CD4-positive, alpha-beta memory T cell (primary cell): ENCODE measurements at regions of chr15 and their contacts with region 1.

Region 1: DNA sequence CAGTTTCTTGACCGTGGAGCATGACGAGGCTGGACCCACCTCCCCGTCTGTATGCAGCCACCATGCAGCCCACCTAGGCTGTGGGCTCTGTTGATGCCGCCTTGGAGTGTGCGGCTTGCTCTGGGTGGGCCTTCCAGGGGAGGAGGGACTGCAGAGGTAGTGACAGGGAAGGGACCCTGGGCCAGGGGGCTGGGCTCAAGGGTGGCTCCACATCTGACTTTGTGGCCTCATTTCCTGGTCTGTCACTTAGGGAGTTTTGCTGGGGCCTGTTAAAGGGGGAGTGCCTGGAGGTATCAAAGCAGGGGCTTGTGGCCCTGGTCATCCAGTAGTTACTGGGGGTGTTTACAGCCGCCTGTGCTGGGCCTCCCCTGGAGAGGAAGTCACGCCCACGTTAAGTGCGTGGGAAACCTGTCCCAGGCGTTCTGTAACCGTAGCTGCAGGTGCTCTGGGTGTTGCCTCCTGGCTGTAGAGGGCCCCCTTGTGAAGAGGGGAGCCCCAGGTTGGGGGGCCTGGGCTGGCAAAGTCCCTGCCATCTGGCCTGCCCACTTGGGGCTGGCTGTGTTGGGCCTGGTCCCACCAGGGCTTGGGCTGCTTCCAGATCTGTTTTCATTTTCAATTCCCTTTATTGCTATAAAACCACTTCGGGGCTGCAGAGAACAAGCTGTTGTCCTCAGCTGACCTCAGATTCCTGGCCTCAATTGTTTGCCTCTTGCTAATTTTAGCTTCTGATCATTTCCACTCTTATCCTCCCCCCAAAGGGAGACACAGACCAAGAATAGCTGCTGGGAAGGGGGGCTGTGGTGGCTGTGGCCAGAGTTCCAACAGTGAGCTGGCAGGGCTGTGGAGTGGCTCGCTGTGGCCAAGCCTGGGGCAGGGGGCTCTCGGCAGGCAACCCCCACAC is 26.5 kb downstream of the KLF13 start:
- DNase-seq: peak in 4 of 5 donors; percentile 42 to 72 (median 52)
- H3K4me3 ChIP-seq: peak overlapping the region; percentile 15 to 31
- H3K4me3 Mint-ChIP-seq: peak overlapping the region; percentile 76 to 92 (median 85)
- H3K27ac ChIP-seq: peak overlapping the region; percentile 74
- H3K27ac Mint-ChIP-seq: peak overlapping the region; percentile 91 to 99 (median 95)
- H3K4me1 ChIP-seq: peaks cover 100% of the 10 kb centered on the region
- H3K4me1 Mint-ChIP-seq: peaks cover 71 to 100% (median 91%) of the 10 kb centered on the region in 4 donors
- H3K27me3 ChIP-seq: no peaks in the 10 kb centered on the region
- H3K27me3 Mint-ChIP-seq: no peaks in the 10 kb centered on the region

Region 2: DNA sequence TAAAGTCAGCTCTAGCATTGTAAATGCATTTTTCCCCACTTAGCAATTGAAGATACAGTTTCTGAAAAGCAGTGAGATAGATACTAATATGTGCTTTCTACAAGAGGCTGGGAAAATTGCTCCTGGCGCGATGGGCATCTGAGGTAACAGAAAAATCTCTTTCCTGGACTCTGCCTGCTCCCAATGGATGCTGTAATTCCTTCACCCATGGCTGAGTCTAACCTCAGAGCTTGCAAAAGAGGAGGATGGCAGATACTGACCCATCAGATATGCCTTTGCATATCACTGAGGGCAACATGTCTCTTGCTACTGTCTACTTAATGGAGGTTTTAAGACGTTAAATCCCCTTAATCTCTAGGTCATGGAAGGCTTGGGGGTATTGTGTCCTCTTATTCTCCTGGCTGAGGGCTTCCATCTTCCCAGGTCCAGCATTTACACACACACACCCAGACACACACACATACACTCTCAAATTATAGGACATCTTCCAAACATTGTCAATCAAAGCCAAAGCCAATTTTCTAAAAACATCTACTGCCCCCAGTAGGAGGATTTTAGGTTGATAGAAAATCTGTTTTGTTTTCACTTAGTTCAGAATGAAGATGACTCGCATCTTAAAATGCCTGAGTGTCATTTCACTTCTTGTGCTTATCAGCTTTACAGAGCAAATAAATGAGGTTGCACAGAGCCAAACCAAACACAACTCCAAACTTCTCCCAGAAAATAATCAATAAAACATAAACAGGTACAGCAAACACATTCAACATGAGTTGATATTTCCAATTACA is 254.0 kb before region 1 on chr15:
- CTCF ChIA-PET with region 1: no interaction called
- POLR2A ChIA-PET with region 1: no interaction called
- intact Hi-C with region 1: no loop called
- DNase-seq: no peak
- H3K4me3 ChIP-seq: no peak overlapping the region
- H3K4me3 Mint-ChIP-seq: no peak overlapping the region
- H3K27ac ChIP-seq: no peak overlapping the region
- H3K27ac Mint-ChIP-seq: no peak overlapping the region
- H3K4me1 ChIP-seq: no peaks in the 10 kb centered on the region
- H3K4me1 Mint-ChIP-seq: no peaks in the 10 kb centered on the region
- H3K27me3 ChIP-seq: no peaks in the 10 kb centered on the region
- H3K27me3 Mint-ChIP-seq: peaks cover 2 to 12% of the 10 kb centered on the region in 2 donors

Region 3: DNA sequence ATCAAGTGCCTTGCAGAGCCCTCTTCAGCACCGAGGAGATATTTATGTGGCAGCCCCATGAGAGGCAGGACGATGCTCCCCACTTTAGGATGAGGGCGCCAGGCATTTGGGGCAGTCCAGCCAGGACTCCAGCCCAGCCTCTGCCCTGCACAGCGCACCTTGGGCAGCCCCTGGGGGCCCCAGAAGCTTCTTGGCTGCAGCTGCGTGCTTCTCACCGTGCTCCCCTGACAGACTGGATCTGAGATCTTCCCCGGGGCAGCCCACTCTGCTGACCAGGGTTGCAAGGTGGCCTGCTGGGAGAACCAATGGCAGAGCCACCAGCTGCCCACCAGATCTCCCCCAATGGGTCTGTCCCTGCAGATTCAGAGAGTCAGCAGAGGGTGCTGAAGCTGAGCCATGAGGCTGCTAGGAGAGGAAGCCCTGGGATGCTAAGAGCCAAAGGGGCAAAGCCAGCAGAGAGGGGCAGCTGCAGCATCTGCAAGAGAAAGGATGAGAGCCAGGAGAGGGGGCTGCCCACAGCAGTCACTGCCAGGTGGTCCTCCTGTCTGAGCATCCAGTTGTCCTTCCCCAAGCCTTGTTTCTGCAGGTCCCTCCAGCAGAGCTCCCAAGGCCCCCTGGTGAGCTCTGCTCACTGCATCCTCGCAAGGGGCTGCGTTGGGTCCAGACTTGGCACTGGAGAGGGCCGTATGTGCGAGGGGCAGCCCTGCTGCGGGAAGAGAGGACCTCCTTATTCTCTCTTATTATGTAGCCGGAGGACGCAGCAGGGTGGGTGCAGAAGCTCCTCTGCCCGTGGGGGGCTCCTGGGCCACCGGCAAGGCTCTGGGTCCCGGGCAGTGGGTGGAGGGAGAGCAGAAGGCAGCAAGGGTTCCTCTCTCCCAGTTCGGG is 41.2 kb before region 1 on chr15:
- CTCF ChIA-PET with region 1: no interaction called
- POLR2A ChIA-PET with region 1: no interaction called
- intact Hi-C with region 1: no loop called
- DNase-seq: no peak
- H3K4me3 ChIP-seq: no peak overlapping the region
- H3K4me3 Mint-ChIP-seq: no peak overlapping the region
- H3K27ac ChIP-seq: no peak overlapping the region
- H3K27ac Mint-ChIP-seq: no peak overlapping the region
- H3K4me1 ChIP-seq: peaks cover 12% of the 10 kb centered on the region
- H3K4me1 Mint-ChIP-seq: peaks cover 7 to 18% (median 11%) of the 10 kb centered on the region in 4 donors
- H3K27me3 ChIP-seq: no peaks in the 10 kb centered on the region
- H3K27me3 Mint-ChIP-seq: peaks cover 0 to 5% of the 10 kb centered on the region in 2 donors

Region 4: DNA sequence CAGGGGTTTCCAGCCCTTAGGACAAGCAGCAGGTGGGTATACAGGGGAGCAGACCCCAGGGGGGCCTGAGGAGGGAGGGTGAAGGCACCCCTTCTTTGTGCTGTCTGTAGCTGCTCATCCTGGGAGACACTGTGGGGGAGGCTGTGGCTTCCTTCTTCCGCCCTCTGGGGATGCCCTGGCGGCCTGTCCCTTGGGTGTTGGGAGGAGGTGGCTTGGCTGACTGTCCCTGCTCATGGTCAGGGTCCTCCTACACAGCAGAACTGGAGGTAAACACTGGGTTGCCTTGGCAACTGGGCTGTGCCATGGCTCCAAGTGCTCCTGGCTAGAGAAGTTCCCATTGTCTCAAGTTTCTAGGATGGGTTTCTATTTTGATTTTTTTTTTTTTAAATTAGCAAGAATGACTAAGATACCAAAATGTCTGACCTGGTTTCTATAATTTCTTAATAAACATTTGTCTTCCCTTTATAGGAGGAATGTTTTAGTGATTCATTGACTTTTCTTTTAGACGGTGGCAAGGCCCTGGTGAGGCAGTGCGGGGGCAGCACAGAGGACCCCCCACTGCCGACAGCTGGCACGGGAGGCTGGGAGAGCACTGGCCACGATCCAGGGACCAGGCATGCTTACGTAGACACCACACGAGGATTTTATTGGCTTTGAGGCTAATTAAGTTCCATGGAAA is 14.1 kb before region 1 on chr15:
- CTCF ChIA-PET with region 1: interaction called, 5 read pairs
- POLR2A ChIA-PET with region 1: interaction called, 562 read pairs
- intact Hi-C with region 1: loop called (anchors 1 kb)
- DNase-seq: no peak
- H3K4me3 ChIP-seq: no peak overlapping the region
- H3K4me3 Mint-ChIP-seq: peak overlapping the region in 7 of 8 donors; percentile 49 to 78 (median 72)
- H3K27ac ChIP-seq: peak overlapping the region; percentile 46
- H3K27ac Mint-ChIP-seq: peak overlapping the region; percentile 86 to 98 (median 91)
- H3K4me1 ChIP-seq: peaks cover 99% of the 10 kb centered on the region
- H3K4me1 Mint-ChIP-seq: peaks cover 71 to 100% (median 95%) of the 10 kb centered on the region in 4 donors
- H3K27me3 ChIP-seq: no peaks in the 10 kb centered on the region
- H3K27me3 Mint-ChIP-seq: no peaks in the 10 kb centered on the region

Region 5: DNA sequence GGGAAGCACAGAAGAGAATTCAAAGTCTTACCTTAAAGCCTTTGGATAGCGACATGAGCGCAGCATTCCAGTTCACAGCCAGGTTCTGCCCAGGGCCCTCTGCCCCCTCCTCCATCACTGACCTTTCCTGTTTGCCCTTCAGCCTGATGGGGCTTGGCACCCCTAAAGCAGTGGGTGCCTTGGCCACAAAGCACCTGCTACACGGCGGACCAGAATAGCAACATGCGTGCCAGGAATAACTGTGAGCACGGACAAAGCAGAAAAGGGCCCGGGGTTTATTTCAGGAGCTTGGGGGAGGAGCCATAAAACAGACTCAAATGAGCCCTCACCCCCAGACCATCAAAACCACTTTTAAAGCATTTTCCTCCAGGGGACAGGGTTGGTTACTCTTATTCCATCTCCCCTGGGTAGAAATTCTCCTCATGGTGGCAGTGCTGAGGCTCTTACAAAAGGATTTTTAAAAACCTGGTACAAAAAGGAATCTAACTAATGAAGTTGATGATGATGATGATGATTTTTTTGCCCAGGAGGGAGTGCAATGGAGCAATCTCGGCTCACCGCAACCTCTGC is 108.8 kb after region 1 on chr15:
- CTCF ChIA-PET with region 1: no interaction called
- POLR2A ChIA-PET with region 1: no interaction called
- intact Hi-C with region 1: no loop called
- DNase-seq: no peak
- H3K4me3 ChIP-seq: no peak overlapping the region
- H3K4me3 Mint-ChIP-seq: no peak overlapping the region
- H3K27ac ChIP-seq: no peak overlapping the region
- H3K27ac Mint-ChIP-seq: peak overlapping the region in 1 of 7 donors; percentile 64
- H3K4me1 ChIP-seq: peaks cover 11% of the 10 kb centered on the region
- H3K4me1 Mint-ChIP-seq: peaks cover 10 to 19% (median 14%) of the 10 kb centered on the region in 4 donors
- H3K27me3 ChIP-seq: no peaks in the 10 kb centered on the region
- H3K27me3 Mint-ChIP-seq: no peaks in the 10 kb centered on the region